ENCODE measurements at regions of chr1 and their contacts with region 1.

Region 1: DNA sequence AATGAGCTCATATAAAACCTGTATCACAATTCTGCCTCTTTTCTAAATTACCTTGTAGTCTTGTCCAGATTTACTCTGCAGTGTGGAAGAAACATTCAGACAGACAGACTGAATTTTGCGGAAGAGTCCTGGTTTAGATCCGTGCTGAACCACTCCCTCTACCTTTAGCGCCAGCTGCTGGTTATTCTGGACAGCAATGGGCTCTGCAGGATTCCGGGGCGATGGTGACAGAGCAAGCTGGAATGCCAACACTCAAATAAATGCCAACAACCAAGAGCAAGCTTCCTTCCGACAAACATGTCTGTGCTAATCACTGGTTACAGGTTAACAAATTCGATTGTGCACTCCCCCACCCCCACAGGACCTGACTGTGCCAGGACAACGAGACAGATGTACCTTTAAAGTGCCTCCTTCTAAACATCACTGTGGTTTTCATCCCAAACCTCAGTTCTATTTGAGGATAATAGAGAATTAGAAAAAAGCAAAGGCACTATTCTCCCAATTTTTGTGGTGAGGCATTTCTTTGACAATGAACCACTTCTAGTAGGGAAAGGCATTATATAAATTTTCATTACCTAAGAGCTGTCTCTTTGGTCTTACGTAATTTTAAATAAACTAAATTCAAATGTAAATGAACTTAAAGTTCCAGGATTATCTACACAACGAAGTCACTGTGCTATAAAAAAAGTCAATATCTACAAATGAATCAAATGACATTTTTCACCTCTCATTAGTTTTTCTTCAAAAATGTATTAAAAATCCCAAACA is 90.4 kb downstream of the INTS7 start:
- DNase-seq: no peak
- H3K4me3 ChIP-seq: no peak overlapping the region
- H3K4me3 Mint-ChIP-seq: no peak overlapping the region
- H3K27ac ChIP-seq: no peak overlapping the region
- H3K27ac Mint-ChIP-seq: peak overlapping the region in 1 of 7 donors; percentile 7
- H3K4me1 ChIP-seq: peaks cover 9 to 11% of the 10 kb centered on the region in 2 donors
- H3K4me1 Mint-ChIP-seq: no peaks in the 10 kb centered on the region
- H3K27me3 ChIP-seq: no peaks in the 10 kb centered on the region
- H3K27me3 Mint-ChIP-seq: no peaks in the 10 kb centered on the region
- CTCF ChIP-seq: no peak

Region 2: GRCh38 chr1:210373885-210374599 is 1570.9 kb before region 1 on chr1:
- intact Hi-C with region 1: loop called in 1 of 2 experiments (anchors 10 kb)
- DNase-seq: peak; percentile 61 to 76 (median 63)
- H3K4me3 ChIP-seq: peak overlapping the region in 1 of 3 experiments; percentile 41
- H3K4me3 Mint-ChIP-seq: peak overlapping the region in 1 of 2 donors; percentile 61
- H3K27ac ChIP-seq: peak overlapping the region in 1 of 2 donors; percentile 83
- H3K27ac Mint-ChIP-seq: peak overlapping the region; percentile 52 to 89 (median 79)
- H3K4me1 ChIP-seq: peaks cover 18 to 33% of the 10 kb centered on the region in 2 donors
- H3K4me1 Mint-ChIP-seq: peaks cover 25% of the 10 kb centered on the region
- H3K27me3 ChIP-seq: no peaks in the 10 kb centered on the region
- H3K27me3 Mint-ChIP-seq: no peaks in the 10 kb centered on the region
- CTCF ChIP-seq: peak; percentile 89